Caco-2 (cell line): ENCODE measurements at regions of chr11 and their contacts with region 1.

Region 1: DNA sequence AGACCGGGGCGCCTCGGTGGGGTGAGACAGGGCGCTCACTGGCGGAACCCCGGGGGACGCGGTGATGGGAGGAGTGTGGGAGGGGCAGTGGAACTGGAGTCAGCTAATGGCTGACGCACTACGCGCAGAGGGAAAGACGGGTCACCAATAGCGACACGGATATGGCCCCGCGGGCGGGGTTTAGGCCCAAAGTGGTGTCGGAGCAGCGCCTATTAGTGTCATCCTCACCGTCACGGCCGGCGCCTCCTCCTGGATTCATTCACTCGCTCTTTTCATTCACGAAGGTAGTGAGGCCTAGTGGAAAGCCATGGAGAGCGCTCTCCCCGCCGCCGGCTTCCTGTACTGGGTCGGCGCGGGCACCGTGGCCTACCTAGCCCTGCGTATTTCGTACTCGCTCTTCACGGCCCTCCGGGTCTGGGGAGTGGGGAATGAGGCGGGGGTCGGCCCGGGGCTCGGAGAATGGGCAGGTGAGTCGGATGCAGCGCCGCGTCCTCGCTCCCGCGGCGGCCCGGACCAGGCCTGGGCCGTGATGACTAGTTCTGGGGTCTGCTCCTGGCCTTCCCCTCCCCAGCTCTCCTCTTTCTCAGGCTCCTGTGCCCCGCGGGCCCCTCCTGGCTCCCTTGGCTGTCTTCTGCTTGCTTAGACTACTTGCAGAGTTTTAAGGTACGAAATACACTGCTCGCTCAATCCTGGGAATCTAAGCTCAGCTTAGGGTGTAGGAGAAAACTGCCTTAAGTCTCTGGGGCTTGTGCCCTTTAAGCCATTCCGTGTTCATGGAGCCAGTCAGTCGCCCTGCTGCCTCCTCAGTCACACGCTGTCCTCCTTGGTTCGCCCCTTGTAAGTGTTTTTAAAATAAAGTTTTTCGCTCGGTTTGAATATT is at the start of gene HSD17B12:
- DNase-seq: peak; percentile 100
- H3K4me3 ChIP-seq: peak within 1 kb of the TSS; percentile 85
- H3K4me3 Mint-ChIP-seq: peak within 1 kb of the TSS; percentile 94
- H3K27ac Mint-ChIP-seq: peak within 1 kb of the TSS; percentile 97
- H3K4me1 ChIP-seq: peaks cover 19% of the 10 kb centered on the region
- H3K4me1 Mint-ChIP-seq: peaks cover 11% of the 10 kb centered on the region
- H3K27me3 ChIP-seq: no peaks in the 10 kb centered on the region
- H3K27me3 Mint-ChIP-seq: no peaks in the 10 kb centered on the region
- CTCF ChIP-seq: no peak
- total RNA-seq, gene HSD17B12: 147 and 155 TPM in 2 replicates

Region 2: GRCh38 chr11:43585877-43586608 is 94.7 kb before region 1 on chr11:
- CTCF ChIA-PET with region 1: no interaction called
- POLR2A ChIA-PET with region 1: no interaction called
- intact Hi-C with region 1: loop called (anchors 5 kb)
- DNase-seq: no peak
- H3K4me3 ChIP-seq: no peak overlapping the region
- H3K4me3 Mint-ChIP-seq: no peak overlapping the region
- H3K27ac Mint-ChIP-seq: no peak overlapping the region
- H3K4me1 ChIP-seq: no peaks in the 10 kb centered on the region
- H3K4me1 Mint-ChIP-seq: no peaks in the 10 kb centered on the region
- H3K27me3 ChIP-seq: peaks cover 1% of the 10 kb centered on the region; the same call in 1 of the 2 replicates
- H3K27me3 Mint-ChIP-seq: peaks cover 27% of the 10 kb centered on the region
- CTCF ChIP-seq: no peak

Region 3: DNA sequence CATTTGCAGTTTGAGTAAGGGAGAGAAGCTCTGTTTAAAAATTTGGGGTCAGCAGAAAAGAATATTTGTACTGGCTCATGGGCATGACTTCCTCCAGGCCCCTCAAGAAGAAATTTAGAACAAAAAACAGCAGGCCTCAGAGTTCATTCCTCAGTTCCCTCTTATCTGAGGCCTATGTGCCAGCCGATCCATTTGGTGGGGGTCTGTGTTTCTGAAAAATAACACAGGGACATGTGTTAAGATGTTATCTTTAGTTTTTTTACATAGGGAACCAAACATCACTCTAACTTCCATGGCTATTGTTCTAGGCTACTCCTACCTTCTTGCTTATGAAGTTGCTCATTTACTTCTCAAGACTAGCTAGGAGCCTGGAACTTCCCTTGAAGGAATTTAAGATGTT is 16.5 kb before region 1 on chr11:
- CTCF ChIA-PET with region 1: no interaction called
- POLR2A ChIA-PET with region 1: no interaction called
- intact Hi-C with region 1: no loop called
- DNase-seq: no peak
- H3K4me3 ChIP-seq: no peak overlapping the region
- H3K4me3 Mint-ChIP-seq: no peak overlapping the region
- H3K27ac Mint-ChIP-seq: no peak overlapping the region
- H3K4me1 ChIP-seq: no peaks in the 10 kb centered on the region
- H3K4me1 Mint-ChIP-seq: no peaks in the 10 kb centered on the region
- H3K27me3 ChIP-seq: no peaks in the 10 kb centered on the region
- H3K27me3 Mint-ChIP-seq: no peaks in the 10 kb centered on the region
- CTCF ChIP-seq: no peak

Region 4: DNA sequence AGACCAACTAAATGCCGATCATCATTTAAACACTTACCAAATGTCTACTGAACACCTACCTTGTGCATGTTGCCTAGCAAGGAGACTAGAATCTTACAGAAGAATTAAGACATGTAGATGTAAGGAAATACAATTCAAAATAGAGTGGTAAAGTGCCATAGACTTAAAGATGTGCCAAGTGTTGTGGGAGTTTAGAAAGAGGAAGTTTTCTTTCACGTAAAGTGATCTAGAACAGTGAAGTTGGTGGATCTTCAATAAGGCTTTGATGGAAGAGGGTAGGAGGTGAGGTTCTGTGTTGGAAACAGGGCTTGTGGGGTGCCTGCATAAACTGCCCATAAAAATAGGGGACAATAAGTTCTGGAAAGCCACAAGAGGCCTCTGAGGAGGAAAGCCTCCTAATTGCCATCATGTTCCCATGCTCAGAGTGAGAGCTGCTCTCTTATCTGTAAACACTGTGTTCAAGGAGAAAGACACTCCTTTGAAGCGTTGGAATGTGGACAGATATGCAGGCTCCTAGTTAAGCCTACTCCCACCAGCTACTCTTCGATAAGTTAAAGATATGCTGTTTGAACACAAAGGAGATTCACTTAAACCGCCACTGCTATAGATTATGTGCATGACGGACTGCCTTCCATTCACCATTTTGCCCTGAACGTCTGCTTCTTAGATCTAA is 66.5 kb after region 1 on chr11:
- CTCF ChIA-PET with region 1: interaction called, 3 read pairs
- POLR2A ChIA-PET with region 1: interaction called, 8 read pairs
- intact Hi-C with region 1: loop called (anchors 1 kb)
- DNase-seq: peak; percentile 77 to 81
- H3K4me3 ChIP-seq: no peak overlapping the region
- H3K4me3 Mint-ChIP-seq: peak overlapping the region; percentile 65
- H3K27ac Mint-ChIP-seq: peak overlapping the region; percentile 96
- H3K4me1 ChIP-seq: peaks cover 57% of the 10 kb centered on the region
- H3K4me1 Mint-ChIP-seq: peaks cover 47% of the 10 kb centered on the region
- H3K27me3 ChIP-seq: no peaks in the 10 kb centered on the region
- H3K27me3 Mint-ChIP-seq: no peaks in the 10 kb centered on the region
- CTCF ChIP-seq: no peak

Region 5: DNA sequence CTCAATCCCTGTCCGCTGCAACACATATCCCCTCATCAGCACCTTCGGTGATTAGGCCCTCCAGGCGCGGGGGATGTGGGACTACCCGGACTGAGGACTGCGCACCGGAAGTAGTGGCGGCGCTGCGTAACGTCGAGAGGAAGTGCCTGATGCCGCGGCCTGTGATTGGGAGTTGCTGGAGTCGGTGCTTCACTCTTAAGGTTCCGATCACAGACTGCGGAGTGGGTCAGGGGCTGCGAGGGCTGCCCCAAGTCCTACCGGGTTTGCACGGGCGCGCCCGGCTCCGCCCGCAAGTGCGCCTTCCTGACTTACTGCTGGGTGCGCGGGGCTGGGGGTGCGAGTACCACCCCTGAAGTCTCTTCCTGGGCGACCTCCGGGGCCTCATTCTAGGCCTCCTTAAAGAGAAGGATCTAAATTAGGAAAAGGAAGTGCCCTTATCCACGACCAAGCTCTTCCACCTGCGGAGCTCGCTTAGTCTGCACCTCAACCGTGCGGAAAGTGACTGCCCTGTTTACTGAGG is 199.9 kb after region 1 on chr11 and contains the start of gene ALKBH3:
- CTCF ChIA-PET with region 1: no interaction called
- POLR2A ChIA-PET with region 1: no interaction called
- intact Hi-C with region 1: loop called (anchors 2 kb)
- DNase-seq: peak; percentile 93 to 94
- H3K4me3 ChIP-seq: peak within 1 kb of the TSS; percentile 52
- H3K4me3 Mint-ChIP-seq: peak within 1 kb of the TSS; percentile 83
- H3K27ac Mint-ChIP-seq: peak within 1 kb of the TSS; percentile 73
- H3K4me1 ChIP-seq: 0 out of 2 replicates have a peak, but pooled peaks cover 6% of the 10 kb centered on the region
- H3K4me1 Mint-ChIP-seq: peaks cover 6% of the 10 kb centered on the region
- H3K27me3 ChIP-seq: no peaks in the 10 kb centered on the region
- H3K27me3 Mint-ChIP-seq: peaks cover 4% of the 10 kb centered on the region
- CTCF ChIP-seq: no peak
- total RNA-seq, gene ALKBH3: 36.8 and 42.4 TPM in 2 replicates